MCF 10A (cell line): ENCODE measurements at regions of chr1 and their contacts with region 1.

Region 1: DNA sequence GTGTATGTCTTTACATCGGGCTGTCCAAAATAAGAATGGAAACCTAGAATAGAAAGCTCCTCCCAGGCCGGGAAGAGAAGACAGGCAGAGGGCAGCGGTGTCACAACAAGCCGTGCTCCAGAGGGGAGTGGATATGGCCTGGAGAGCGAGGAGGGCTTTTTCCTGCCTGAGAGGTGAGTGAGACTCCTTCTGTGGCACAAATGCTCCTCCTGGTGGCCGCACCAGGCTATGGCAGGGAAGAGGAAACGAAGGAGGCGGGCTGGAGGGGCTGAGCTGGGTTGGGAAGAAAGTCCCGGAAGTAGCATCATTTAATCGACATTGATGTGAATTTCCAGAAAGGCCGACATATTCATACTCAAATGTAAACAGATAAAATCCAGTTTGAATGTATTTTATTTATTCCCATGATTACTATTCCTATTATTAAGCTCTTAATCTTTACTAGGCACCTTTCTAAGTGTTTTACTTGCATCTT is 54.7 kb downstream of the MEF2D start:
- DNase-seq: peak; percentile 91
- H3K4me3 Mint-ChIP-seq: no peak overlapping the region
- H3K27ac Mint-ChIP-seq: no peak overlapping the region
- H3K4me1 Mint-ChIP-seq: no peaks in the 10 kb centered on the region
- H3K27me3 Mint-ChIP-seq: peaks cover 24% of the 10 kb centered on the region
- CTCF ChIP-seq: peak; percentile 99

Region 2: DNA sequence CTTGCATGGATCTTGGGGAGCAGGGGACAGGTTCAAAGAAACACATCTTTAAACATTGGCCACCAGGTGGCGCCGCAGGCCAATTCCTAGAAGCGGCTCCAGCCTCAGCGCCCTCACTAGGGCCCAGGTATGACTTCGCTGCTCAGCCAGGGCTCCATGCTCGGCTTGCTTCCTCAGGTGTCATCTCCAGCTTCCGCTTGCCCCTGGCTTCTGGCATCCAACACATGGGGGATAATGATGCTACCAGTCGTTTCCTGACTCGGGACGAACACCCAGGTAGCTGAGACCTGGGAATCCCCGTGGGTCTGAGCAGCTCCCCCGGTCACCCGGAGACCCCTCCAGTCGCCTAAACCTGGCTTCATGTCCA is 355.0 kb before region 1 on chr1:
- CTCF ChIA-PET with region 1: no interaction called
- POLR2A ChIA-PET with region 1: no interaction called
- intact Hi-C with region 1: loop called (anchors 2 kb)
- DNase-seq: peak; percentile 95
- H3K4me3 Mint-ChIP-seq: no peak overlapping the region
- H3K27ac Mint-ChIP-seq: no peak overlapping the region
- H3K4me1 Mint-ChIP-seq: peaks cover 8% of the 10 kb centered on the region
- H3K27me3 Mint-ChIP-seq: no peaks in the 10 kb centered on the region
- CTCF ChIP-seq: peak; percentile 98

Region 3: DNA sequence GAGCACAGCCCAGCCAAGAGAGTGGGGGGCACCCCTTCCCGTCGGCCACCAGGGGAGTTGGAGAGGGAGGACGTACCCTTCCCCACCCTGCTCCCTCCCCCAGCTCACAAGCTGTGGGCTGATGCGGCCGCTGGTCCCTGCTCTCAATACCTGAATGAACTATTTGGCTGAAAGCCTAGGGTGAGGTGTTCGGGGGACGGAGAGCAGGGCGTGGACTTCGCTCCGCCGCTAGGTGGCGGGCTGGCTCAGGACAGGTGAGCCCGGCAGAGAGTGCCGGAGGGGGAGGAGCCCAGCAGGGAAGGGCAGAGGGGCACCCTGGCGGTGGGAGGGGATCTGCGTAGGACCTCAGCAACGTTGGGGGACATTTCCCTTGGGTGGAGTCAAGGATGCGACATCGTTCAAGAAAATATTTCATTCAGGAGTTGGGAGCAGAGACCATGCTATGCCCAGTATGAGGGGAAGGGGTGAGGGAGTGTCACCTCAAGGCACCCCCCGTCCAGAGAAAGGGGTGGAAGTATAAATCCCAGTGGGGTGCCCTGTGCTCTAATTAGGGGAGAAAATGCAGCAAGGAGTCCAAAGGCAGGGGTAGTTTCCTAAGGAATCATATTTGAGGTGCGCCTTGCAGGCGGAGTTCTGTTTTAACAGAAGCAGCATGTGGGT is 88.8 kb before region 1 on chr1:
- CTCF ChIA-PET with region 1: interaction called, 52 read pairs
- POLR2A ChIA-PET with region 1: interaction called, 3 read pairs
- intact Hi-C with region 1: loop called (anchors 1 kb)
- DNase-seq: peak; percentile 85
- H3K4me3 Mint-ChIP-seq: no peak overlapping the region
- H3K27ac Mint-ChIP-seq: no peak overlapping the region
- H3K4me1 Mint-ChIP-seq: peaks cover 7% of the 10 kb centered on the region
- H3K27me3 Mint-ChIP-seq: peaks cover 52% of the 10 kb centered on the region
- CTCF ChIP-seq: peak; percentile 98

Region 4: DNA sequence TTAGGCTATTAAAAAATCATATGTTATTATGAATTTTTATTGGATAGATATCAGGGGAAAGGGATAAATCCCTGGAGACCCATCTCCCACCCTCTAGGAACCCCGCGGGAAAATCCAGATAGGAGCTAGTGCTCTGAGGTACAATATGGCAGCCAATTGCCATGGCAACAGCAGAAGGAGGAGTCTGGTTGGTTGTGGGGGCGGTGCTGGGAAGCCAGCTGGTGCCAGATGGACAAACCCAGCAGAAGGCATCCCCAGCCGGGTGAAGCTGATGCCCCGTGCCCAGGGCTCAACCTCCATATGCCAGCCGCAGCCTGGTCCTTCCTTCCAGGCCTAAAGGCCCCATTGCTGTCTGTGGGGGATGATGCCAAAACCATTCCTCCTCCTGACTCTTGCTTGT is 38.5 kb before region 1 on chr1:
- CTCF ChIA-PET with region 1: interaction called, 11 read pairs
- POLR2A ChIA-PET with region 1: no interaction called
- intact Hi-C with region 1: no loop called
- DNase-seq: no peak
- H3K4me3 Mint-ChIP-seq: no peak overlapping the region
- H3K27ac Mint-ChIP-seq: no peak overlapping the region
- H3K4me1 Mint-ChIP-seq: no peaks in the 10 kb centered on the region
- H3K27me3 Mint-ChIP-seq: peaks cover 93% of the 10 kb centered on the region
- CTCF ChIP-seq: no peak

Region 5: GRCh38 chr1:156456622-156457465 is 11.0 kb after region 1 on chr1:
- CTCF ChIA-PET with region 1: interaction called, 39 read pairs
- POLR2A ChIA-PET with region 1: interaction called, 10 read pairs
- intact Hi-C with region 1: no loop called
- DNase-seq: peak; percentile 100
- H3K4me3 Mint-ChIP-seq: peak overlapping the region; percentile 90
- H3K27ac Mint-ChIP-seq: peak overlapping the region; percentile 99
- H3K4me1 Mint-ChIP-seq: peaks cover 42% of the 10 kb centered on the region
- H3K27me3 Mint-ChIP-seq: no peaks in the 10 kb centered on the region
- CTCF ChIP-seq: no peak

Region 6: DNA sequence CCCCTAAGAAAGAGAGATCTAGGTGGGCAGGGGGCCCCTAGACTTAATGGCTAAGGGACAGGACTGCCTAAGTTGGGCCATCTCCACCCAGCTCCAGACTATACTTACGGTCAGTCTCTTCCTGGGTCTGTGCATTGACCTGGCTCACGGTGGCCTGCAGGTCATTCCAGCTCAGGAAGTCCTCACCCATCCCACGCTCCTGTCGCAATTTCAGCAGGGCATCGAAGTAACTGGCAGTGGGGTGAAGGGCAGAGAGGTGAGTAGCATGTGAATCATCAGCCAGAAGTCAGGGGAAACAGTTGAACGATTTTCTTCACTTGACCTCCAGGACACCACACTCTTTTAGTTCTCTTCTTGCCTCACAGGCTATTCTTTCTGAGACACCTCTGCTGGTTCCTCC is 106.0 kb after region 1 on chr1:
- CTCF ChIA-PET with region 1: interaction called, 11 read pairs
- POLR2A ChIA-PET with region 1: no interaction called
- intact Hi-C with region 1: no loop called
- DNase-seq: peak; percentile 96
- H3K4me3 Mint-ChIP-seq: no peak overlapping the region
- H3K27ac Mint-ChIP-seq: peak overlapping the region; percentile 24
- H3K4me1 Mint-ChIP-seq: peaks cover 17% of the 10 kb centered on the region
- H3K27me3 Mint-ChIP-seq: no peaks in the 10 kb centered on the region
- CTCF ChIP-seq: no peak

Region 7: GRCh38 chr1:156618853-156619581 is 173.2 kb after region 1 on chr1 and contains the start of gene HAPLN2:
- CTCF ChIA-PET with region 1: interaction called, 19 read pairs
- POLR2A ChIA-PET with region 1: interaction called, 3 read pairs
- intact Hi-C with region 1: no loop called
- DNase-seq: peak; percentile 57
- H3K4me3 Mint-ChIP-seq: no peak within 1 kb of the TSS
- H3K27ac Mint-ChIP-seq: no peak within 1 kb of the TSS
- H3K4me1 Mint-ChIP-seq: peaks cover 15% of the 10 kb centered on the region
- H3K27me3 Mint-ChIP-seq: peaks cover 54% of the 10 kb centered on the region
- CTCF ChIP-seq: peak; percentile 51
- total RNA-seq, gene HAPLN2: not detected in 2 replicates